Posterior vena cava (tissue), 2 donors: ENCODE measurements at regions of chrX and their contacts with region 1.

Region 1: GRCh38 chrX:131812836-131813825 is 210.0 kb upstream of the STK26 start:
- DNase-seq: peak; percentile 88

Region 2: DNA sequence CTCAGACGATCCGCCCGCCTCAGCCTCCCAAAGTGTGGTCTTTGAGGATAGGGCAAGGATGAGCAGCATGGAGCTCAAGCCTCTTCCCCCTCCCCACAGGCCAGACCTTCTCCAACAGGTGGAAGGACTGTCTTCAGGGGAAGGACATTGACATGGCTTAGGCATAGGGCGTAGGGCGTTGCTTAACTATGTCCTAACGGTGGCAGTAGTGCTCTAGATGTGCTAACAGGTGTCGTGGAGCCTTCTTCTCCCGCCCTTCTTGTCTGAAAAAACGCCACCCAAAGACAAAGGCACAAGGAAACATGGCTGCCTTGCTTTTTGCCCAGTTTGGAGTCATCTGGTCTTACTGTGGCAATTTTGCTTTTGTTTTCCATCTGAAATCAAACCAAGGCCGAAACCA is 49.5 kb before region 1 on chrX:
- intact Hi-C with region 1: loop called in 1 of 2 experiments (anchors 10 kb)
- DNase-seq: peak; percentile 89